HEK293 (cell line): ENCODE measurements at regions of chr17 and their contacts with region 1.

Region 1: GRCh38 chr17:81200695-81201580 is 21.8 kb downstream of the CEP131 start:
- H3K4me3 ChIP-seq: no peak overlapping the region
- H3K27ac ChIP-seq: 0 out of 2 replicates have a peak overlapping the region, but pooled peaks have one; percentile 14
- H3K4me1 ChIP-seq: no peaks in the 10 kb centered on the region
- CTCF ChIP-seq: no peak; the same call in 1 of the 2 replicates

Region 2: DNA sequence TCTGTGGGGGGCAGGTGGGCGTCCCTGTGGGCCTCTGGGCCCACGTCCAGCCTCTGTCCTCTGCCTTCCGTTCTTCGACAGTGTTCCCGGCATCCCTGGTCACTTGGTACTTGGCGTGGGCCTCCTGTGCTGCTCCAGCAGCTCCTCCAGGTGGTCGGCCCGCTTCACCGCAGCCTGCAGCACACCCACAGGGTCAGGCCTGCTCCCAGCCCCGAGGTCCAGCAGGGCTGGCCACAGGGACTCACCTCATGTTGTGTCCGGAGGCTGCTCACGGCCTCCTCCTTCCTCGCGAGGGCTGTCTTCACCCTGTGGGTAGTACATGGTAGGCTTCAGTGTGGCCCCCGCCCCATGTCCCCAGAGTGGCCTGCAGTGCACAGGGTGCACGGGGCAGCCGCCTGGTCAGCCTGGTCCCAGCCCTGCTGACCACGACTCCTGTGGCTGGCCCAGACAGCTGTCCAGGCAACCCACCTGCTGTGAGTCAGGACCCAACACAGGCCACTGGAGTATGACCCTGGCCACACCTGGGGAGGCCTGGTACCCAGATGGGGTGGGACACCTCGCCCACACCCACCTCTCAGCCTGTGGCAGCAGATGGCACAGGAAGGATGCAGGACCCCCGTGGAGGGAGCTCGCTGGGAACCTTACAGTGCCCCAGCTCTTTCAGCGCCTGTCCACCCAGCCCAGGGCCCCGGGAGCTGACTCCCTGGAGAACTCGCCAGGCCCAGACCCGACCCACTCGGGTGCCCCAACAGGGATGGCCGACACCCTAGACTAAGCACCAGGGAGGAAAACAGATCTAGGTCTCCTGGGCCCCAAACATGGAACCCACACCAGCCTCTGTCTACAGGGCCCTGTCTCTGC is 11.0 kb before region 1 on chr17:
- CTCF ChIA-PET with region 1: interaction called, 12 read pairs
- POLR2A ChIA-PET with region 1: interaction called, 3 read pairs
- H3K4me3 ChIP-seq: no peak overlapping the region
- H3K27ac ChIP-seq: no peak overlapping the region
- H3K4me1 ChIP-seq: no peaks in the 10 kb centered on the region
- CTCF ChIP-seq: peak; percentile 71